AG04449 (cell line): ENCODE measurements at regions of chr18 and their contacts with region 1.

Region 1: GRCh38 chr18:765764-766549 is 46.1 kb downstream of the YES1 start:
- DNase-seq: no peak
- H3K4me3 ChIP-seq: no peak overlapping the region
- CTCF ChIP-seq: no peak

Region 2: GRCh38 chr18:741931-742512 is 23.9 kb before region 1 on chr18:
- CTCF ChIA-PET with region 1: interaction called, 10 read pairs
- POLR2A ChIA-PET with region 1: no interaction called
- DNase-seq: peak; percentile 4
- H3K4me3 ChIP-seq: no peak overlapping the region
- CTCF ChIP-seq: peak; percentile 50